Left colon (tissue), 2 donors: ENCODE measurements at regions of chr2 and their contacts with region 1.

Region 1: DNA sequence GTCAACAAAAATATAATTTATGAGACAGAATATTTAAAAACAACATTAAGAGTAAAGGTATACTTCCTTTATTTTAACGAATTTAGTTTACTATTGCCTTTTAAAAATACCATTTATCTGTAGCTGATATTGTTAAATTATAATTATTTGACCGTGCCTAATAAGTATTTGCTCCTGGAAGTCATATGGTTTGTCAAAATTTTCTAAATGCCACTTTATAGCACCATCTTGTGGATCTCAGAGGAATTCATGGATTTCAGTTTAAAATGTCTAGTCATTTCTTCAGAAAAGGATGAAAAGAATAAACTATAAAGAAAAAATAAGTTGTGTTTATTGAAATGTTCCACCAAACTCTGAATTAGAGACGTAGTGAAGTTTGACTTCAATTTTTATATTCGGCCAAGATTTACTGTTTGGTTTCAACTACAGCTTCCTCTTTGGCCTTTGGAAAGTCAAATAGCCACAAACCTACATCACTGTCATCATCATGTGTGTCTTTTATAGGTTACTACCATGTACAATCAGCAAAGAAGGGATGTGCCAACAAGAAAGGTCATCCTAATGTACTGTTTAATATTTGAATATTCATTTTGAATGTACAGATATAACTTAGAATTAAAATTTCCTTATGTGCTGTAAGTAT is 10.3 kb upstream of the FTCDNL1 start:
- DNase-seq: no peak
- ATAC-seq: no peak

Region 2: DNA sequence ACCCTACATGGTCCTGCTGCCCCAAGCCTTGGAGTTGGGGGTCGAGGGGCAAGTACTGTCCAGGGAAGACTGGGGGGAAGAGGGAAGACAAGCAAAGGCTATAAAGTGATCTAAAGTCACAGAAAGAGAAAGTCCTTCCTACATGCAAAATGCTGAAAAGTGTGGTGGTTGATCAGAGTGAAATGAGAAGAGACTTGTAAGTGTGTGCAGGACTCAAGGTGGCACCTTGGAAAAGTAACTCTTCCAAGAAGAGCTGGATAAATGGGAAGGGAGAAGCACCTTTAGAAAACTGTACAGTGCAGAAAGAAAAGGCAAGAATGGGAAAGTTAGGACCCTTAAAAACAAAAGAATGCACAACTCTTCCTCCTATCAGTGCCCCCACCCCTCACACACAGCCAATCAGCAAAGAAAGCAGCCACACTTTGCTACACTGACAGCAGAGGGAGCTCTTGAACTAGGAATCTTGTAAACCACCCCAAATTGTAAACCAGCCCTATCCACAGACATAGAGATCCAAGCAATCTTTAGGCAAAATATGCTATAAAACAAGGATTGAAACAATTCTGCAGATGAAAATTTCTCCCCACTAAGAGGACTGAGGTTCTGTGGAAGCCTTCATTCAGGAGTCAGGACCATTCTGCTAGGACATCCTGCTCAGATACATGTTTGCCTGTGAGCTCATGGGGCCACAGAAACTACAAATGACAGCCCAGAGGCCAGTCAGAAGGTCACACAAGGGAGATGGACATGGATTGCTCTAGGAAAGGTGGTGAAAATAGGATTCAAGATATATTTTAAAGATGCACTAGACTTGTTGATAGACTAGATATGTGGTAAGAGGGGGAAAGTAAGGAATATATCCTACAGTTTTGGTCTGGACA is 156.7 kb before region 1 on chr2:
- intact Hi-C with region 1: loop called in 1 of 2 experiments (anchors 10 kb)
- DNase-seq: peak in 1 of 2 donors; percentile 51
- ATAC-seq: peak; percentile 94

Region 3: GRCh38 chr2:199739413-199740110 is 121.7 kb before region 1 on chr2:
- intact Hi-C with region 1: loop called in 1 of 2 experiments (anchors 10 kb)
- DNase-seq: peak; percentile 52 to 85
- ATAC-seq: peak; percentile 72

Region 4: GRCh38 chr2:200498402-200499162 is 637.3 kb after region 1 on chr2:
- intact Hi-C with region 1: no loop called
- DNase-seq: no peak
- ATAC-seq: no peak